Activated CD4-positive, alpha-beta memory T cell treated with anti-CD3 and anti-CD28 coated beads for 36 hours (primary cell): ENCODE measurements at regions of chr3 and their contacts with region 1.

Region 1: DNA sequence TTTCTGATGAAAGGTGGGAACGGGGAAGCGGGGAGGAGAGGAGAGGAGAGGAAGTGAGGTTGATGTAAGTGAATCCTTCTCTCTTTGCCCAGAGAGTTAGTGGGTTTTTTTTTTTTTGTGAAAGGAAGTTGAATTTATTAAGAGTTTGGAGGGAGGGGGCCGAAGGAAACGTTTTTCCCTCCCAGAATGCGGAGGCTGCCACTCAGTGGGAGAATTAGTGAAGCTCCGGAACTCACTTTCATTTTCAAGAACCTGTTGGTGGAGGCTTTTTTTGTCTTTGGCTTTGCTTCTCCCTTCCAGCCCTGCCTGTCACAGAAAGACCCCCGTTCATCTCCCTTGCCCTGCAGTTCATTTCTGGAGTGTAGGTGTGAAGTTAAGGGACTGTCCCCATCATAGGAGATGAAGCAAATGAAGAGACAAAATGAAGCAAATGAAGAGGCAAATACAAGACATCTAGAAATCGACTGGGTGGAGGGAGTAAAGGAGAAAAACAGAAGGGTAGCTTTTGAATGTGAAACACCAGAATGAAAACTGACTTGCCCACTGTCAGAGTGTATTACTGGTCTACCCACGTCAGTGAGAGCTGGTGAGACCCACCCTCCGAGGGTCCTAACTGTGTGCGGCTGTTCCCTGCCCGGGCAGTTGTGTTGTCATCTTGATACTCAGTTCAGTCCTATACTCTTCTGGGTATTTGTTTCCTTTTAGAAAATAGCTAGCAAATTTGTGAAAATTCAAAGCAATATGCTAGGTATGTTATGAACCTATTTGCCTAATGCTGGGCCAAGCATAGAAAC is 91.5 kb downstream of the ITPR1 start:
- DNase-seq: peak; percentile 48
- H3K4me3 Mint-ChIP-seq: peak overlapping the region; percentile 81
- H3K27ac Mint-ChIP-seq: peak overlapping the region; percentile 73
- H3K4me1 Mint-ChIP-seq: peaks cover 66% of the 10 kb centered on the region
- H3K27me3 Mint-ChIP-seq: no peaks in the 10 kb centered on the region

Region 2: DNA sequence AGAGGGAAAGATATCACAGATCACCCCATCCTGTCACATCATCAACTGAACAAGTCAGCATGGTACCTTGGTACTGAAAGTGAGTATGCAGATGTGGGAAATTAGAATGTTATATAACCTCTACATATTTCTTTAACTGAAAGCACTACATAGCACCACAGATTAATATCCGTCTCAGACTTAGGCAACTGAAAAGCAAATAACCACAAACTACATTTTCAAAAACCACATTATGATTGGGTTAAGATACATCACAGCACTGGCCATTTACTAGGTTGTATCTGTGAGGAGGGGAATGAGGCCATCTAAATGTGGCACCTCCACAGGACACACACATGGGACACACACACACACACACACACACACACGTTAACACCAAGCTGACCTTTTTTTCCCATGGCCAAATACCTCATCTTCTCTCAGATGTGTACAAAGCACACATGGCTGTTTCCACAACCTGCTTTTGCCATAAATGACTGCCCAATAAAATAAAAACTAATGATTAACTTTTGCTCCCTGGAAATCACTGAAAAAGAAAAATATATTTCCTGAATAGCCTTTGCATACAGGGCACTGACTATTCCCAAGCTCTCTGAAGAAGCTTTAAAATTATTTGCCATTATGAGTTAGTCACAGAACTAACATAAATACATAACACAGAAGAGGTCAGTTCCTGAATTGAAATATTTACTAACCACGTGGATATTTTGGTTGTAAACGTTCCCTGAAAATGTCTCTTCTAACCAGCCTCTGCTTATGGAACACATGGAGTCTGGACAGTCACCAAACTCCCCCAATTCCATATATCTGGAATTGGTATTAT is 177.7 kb before region 1 on chr3:
- CTCF ChIA-PET with region 1: no interaction called
- POLR2A ChIA-PET with region 1: no interaction called
- intact Hi-C with region 1: loop called (anchors 5 kb)
- DNase-seq: no peak
- H3K4me3 Mint-ChIP-seq: no peak overlapping the region
- H3K27ac Mint-ChIP-seq: no peak overlapping the region
- H3K4me1 Mint-ChIP-seq: peaks cover 47% of the 10 kb centered on the region
- H3K27me3 Mint-ChIP-seq: no peaks in the 10 kb centered on the region

Region 3: GRCh38 chr3:4524088-4525023 is 60.3 kb before region 1 on chr3:
- CTCF ChIA-PET with region 1: interaction called, 5 read pairs
- POLR2A ChIA-PET with region 1: no interaction called
- intact Hi-C with region 1: loop called (anchors 1 kb)
- DNase-seq: no peak
- H3K4me3 Mint-ChIP-seq: no peak overlapping the region
- H3K27ac Mint-ChIP-seq: no peak overlapping the region
- H3K4me1 Mint-ChIP-seq: peaks cover 5% of the 10 kb centered on the region
- H3K27me3 Mint-ChIP-seq: no peaks in the 10 kb centered on the region

Region 4: GRCh38 chr3:4536258-4536657 is 48.4 kb before region 1 on chr3:
- CTCF ChIA-PET with region 1: no interaction called
- POLR2A ChIA-PET with region 1: no interaction called
- intact Hi-C with region 1: no loop called
- DNase-seq: no peak
- H3K4me3 Mint-ChIP-seq: no peak overlapping the region
- H3K27ac Mint-ChIP-seq: no peak overlapping the region
- H3K4me1 Mint-ChIP-seq: peaks cover 6% of the 10 kb centered on the region
- H3K27me3 Mint-ChIP-seq: no peaks in the 10 kb centered on the region

Region 5: DNA sequence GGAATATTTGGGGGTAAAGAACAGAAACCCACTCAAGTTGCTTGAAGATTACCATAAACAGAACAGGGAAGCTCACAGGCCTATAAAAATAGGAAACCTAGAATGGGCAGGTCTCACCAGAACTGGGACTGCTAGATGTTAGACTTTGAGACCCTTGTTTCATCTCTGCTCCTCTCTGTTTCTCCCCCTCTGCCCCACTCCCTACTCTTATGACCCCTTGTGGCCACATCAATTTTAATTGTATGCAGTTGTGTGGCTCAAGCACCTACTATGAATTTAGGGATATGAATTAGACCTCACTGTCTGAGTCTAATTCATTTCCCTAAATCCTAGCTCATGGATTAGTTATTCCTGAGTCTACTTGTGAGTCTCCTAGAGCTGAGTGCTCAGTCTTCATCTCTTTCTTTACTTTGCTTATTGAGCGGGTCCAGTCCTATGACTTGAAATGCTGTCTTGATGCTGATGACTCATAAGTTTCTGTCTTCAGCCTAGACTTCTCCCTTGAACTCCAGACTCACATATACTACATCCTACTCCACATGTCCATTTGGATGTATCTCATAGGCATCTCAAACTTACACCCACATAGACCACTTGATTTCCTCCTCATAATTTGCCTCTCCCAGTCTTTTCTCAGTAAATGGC is 12.8 kb before region 1 on chr3:
- CTCF ChIA-PET with region 1: no interaction called
- POLR2A ChIA-PET with region 1: no interaction called
- intact Hi-C with region 1: loop called (anchors 2 kb)
- DNase-seq: no peak
- H3K4me3 Mint-ChIP-seq: no peak overlapping the region
- H3K27ac Mint-ChIP-seq: no peak overlapping the region
- H3K4me1 Mint-ChIP-seq: peaks cover 7% of the 10 kb centered on the region
- H3K27me3 Mint-ChIP-seq: no peaks in the 10 kb centered on the region